H1 (cell line): ENCODE measurements at regions of chr2 and their contacts with region 1.

Region 1: GRCh38 chr2:72993147-72993932 is 76.0 kb downstream of the EMX1 start:
- DNase-seq: peak in 1 of 2 experiments; percentile 82
- H3K4me3 ChIP-seq: no peak overlapping the region
- H3K27ac ChIP-seq: no peak overlapping the region
- H3K4me1 ChIP-seq: peaks cover 0 to 2% (median 0%) of the 10 kb centered on the region in 4 experiments; a peak in 3 of 7 replicates
- H3K27me3 ChIP-seq: no peaks in the 10 kb centered on the region; a peak in 3 of 7 replicates
- CTCF ChIP-seq: peak; percentile 62 to 81 (median 71)
- EP300 ChIP-seq: no peak
- POLR2A ChIP-seq: no peak
- RAD21 ChIP-seq: peak; percentile 69 to 74

Region 2: DNA sequence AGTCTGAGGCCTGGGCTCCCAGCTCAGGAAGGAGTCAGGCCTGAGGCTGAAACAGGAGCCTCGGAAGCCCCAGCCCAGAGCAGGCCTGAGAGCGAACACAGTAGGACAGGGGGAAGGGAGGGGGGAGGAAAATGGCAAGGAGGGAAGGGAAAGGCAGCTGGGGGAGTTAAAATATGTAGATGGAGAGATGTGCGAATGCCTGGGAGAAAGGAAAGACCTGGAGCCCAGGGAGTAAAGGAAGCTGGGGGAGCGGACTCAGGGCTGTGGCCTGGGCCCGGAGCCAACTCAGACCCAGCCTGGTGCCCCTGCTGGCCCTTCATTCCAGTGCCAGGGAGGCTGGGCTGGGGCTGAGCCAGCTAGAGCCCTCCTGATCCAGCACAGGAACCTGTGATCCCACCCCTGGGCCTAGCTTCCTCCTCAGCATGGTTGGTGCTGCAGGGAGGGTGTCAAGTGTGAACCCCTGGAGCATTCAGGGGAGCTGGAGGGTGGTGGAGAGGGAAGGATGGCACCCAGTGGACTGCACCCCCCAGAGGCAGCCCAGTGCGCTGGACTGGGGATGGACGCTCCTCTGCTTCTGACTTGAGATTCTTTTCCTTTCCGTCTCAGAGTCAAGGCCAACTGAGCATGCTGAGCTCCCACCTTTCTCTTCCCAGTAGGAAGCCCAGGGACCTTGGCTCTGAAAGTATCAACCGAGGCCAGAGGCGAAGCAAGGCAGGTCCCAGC is 29.8 kb before region 1 on chr2:
- CTCF ChIA-PET with region 1: interaction called, 13 read pairs
- POLR2A ChIA-PET with region 1: no interaction called
- DNase-seq: peak; percentile 61 to 76
- H3K4me3 ChIP-seq: 0 out of 8 replicates have a peak overlapping the region, but pooled peaks of 1 of the 4 experiments have one; percentile 2
- H3K27ac ChIP-seq: peak overlapping the region; percentile 49; the same call in 1 of the 2 replicates
- H3K4me1 ChIP-seq: peaks cover 12 to 26% (median 22%) of the 10 kb centered on the region in 4 experiments
- H3K27me3 ChIP-seq: peaks cover 0 to 5% (median 0%) of the 10 kb centered on the region in 4 experiments; a peak in 1 of 7 replicates
- CTCF ChIP-seq: no peak
- EP300 ChIP-seq: peak in 1 of 2 experiments; percentile 69; a peak in 1 of 3 replicates
- POLR2A ChIP-seq: no peak
- RAD21 ChIP-seq: peak; percentile 17 to 30; a peak in 3 of 4 replicates

Region 3: GRCh38 chr2:72980535-72981217 is 12.7 kb before region 1 on chr2:
- CTCF ChIA-PET with region 1: interaction called, 60 read pairs
- POLR2A ChIA-PET with region 1: interaction called, 3 read pairs
- DNase-seq: no peak
- H3K4me3 ChIP-seq: no peak overlapping the region
- H3K27ac ChIP-seq: no peak overlapping the region
- H3K4me1 ChIP-seq: peaks cover 0 to 4% (median under 1%) of the 10 kb centered on the region in 4 experiments; a peak in 4 of 7 replicates
- H3K27me3 ChIP-seq: 0 out of 7 replicates have a peak, but pooled peaks cover 0 to 2% (median 0%) of the 10 kb centered on the region in 4 experiments
- CTCF ChIP-seq: no peak
- EP300 ChIP-seq: no peak
- POLR2A ChIP-seq: no peak
- RAD21 ChIP-seq: no peak

Region 4: GRCh38 chr2:73004889-73005596 is 11.7 kb after region 1 on chr2:
- CTCF ChIA-PET with region 1: interaction called, 20 read pairs
- POLR2A ChIA-PET with region 1: interaction called, 3 read pairs
- DNase-seq: peak in 1 of 2 experiments; percentile 40
- H3K4me3 ChIP-seq: no peak overlapping the region
- H3K27ac ChIP-seq: no peak overlapping the region
- H3K4me1 ChIP-seq: no peaks in the 10 kb centered on the region
- H3K27me3 ChIP-seq: no peaks in the 10 kb centered on the region
- CTCF ChIP-seq: no peak
- EP300 ChIP-seq: no peak
- POLR2A ChIP-seq: no peak
- RAD21 ChIP-seq: no peak

Region 5: GRCh38 chr2:73156539-73157124 is 163.3 kb after region 1 on chr2:
- CTCF ChIA-PET with region 1: interaction called, 70 read pairs
- POLR2A ChIA-PET with region 1: no interaction called
- DNase-seq: peak; percentile 77 to 89
- H3K4me3 ChIP-seq: peak overlapping the region; percentile 20 to 54 (median 38); a peak in 6 of 8 replicates
- H3K27ac ChIP-seq: no peak overlapping the region
- H3K4me1 ChIP-seq: peaks cover 0 to 3% (median 0%) of the 10 kb centered on the region in 4 experiments; a peak in 2 of 7 replicates
- H3K27me3 ChIP-seq: peaks cover 0 to 7% (median 2%) of the 10 kb centered on the region in 4 experiments; a peak in 4 of 7 replicates
- CTCF ChIP-seq: peak; percentile 95 to 99 (median 95)
- EP300 ChIP-seq: peak in 1 of 2 experiments; percentile 31; a peak in 1 of 3 replicates
- POLR2A ChIP-seq: no peak
- RAD21 ChIP-seq: peak; percentile 95 to 98

Region 6: DNA sequence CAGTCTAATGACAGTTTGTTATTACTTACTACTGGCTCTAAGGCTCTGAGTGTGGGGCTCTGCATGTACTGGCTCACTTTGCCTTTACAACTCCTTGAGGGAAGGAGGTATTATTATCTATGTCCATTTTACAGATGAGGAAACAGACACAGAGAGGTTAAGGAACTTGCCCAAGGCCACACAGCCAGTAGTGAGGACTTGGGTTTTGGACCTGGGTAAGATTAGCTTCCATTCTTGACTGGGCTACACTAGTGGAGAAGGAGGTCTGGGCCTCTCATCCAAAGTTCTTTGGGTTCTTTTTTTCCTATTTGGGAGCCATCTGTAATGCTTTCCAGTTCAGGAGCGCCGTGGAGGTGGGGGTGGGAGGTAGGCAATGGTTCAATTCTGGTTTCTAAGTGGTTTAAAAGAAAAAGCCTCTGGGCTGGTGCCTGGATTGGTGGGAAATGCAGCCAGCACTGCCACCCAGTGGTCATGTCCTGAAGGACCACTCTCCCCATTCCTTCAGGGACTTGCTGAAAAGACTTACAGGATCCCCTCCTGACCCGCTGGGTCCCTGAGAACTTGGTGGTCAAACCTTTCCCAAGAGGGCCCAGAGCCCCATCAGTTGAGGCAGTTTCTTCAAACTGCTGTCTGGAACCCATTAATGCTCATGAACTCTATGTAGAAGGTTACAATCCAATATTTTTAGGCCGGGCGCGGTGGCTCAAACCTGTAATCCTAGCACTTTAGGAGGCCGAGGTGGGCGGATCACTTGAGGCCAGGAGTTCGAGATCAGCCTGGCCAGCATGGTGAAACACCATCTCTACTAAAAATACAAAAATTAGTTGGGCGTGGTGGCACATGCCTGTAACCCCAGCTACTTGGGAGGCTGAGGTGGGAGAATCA is 170.4 kb after region 1 on chr2:
- CTCF ChIA-PET with region 1: interaction called, 70 read pairs
- POLR2A ChIA-PET with region 1: no interaction called
- DNase-seq: peak; percentile 63 to 92
- H3K4me3 ChIP-seq: no peak overlapping the region
- H3K27ac ChIP-seq: no peak overlapping the region
- H3K4me1 ChIP-seq: no peaks in the 10 kb centered on the region
- H3K27me3 ChIP-seq: no peaks in the 10 kb centered on the region
- CTCF ChIP-seq: peak; percentile 87 to 91 (median 89)
- EP300 ChIP-seq: no peak
- POLR2A ChIP-seq: no peak
- RAD21 ChIP-seq: peak; percentile 91